Esophagus squamous epithelium (tissue), 5 donors: ENCODE measurements at regions of chr17 and their contacts with region 1.

Region 1: GRCh38 chr17:14300575-14301278 is at the start of gene HS3ST3B1:
- DNase-seq: peak; percentile 84
- H3K4me3 ChIP-seq: peak within 1 kb of the TSS; percentile 67 to 83 (median 72)
- H3K27ac ChIP-seq: peak within 1 kb of the TSS; percentile 84 to 88 (median 88)
- H3K4me1 ChIP-seq: peaks cover 27 to 88% (median 30%) of the 10 kb centered on the region in 3 donors
- H3K27me3 ChIP-seq: peaks cover 0 to 100% (median 22%) of the 10 kb centered on the region in 4 donors
- CTCF ChIP-seq: peak in 3 of 6 experiments; percentile 9 to 25 (median 19)
- POLR2A ChIP-seq: peak in 2 of 4 donors; percentile 73 to 95
- total RNA-seq, gene HS3ST3B1: 5.6 to 7.6 (median 6.4) TPM

Region 2: DNA sequence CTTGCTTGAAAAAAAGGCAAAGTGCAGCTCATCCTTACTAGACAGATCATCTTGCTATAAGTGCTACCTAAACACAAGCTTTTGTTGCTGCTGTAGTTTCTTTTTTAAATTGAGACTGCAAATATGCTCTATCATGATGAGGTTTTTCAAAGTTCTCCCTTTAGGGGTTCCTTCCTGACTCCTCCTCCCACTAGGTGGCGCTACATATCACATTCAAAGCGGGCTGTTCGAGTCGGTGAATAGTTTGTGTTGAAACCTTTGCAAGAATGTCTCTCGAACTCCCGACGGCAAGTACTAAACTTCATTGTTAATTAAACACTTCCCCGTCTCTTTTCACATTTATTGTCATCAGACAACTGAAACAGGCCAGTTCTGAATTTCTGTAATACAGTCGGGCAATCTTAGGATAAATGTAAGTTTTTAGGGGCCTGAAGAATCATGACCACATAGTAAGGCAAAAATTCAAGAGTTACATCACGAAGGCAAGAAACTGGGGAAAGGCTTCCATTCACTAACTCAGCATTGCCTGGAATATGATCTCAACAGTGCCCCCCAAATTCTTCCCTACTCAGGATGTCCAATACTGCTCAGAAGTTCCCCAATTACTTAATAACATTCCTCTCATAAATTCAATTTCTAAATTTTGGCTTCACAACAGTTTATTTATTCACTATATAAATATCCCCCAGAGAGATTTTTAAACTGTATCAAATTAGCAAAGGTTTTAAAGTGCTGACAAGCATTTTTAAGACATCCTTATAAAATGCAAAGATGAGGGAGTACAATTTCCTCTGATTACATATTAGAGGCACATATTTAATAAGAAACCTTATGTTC is 705.7 kb before region 1 on chr17:
- intact Hi-C with region 1: loop called (anchors 5 kb)
- DNase-seq: peak; percentile 16
- H3K4me3 ChIP-seq: no peak overlapping the region
- H3K27ac ChIP-seq: peak overlapping the region in 1 of 4 donors; percentile 18
- H3K4me1 ChIP-seq: peaks cover 0 to 26% (median 0%) of the 10 kb centered on the region in 3 donors
- H3K27me3 ChIP-seq: peaks cover 0 to 34% (median 0%) of the 10 kb centered on the region in 4 donors
- CTCF ChIP-seq: peak; percentile 76 to 92 (median 86)
- POLR2A ChIP-seq: no peak

Region 3: GRCh38 chr17:13874817-13875216 is 425.9 kb before region 1 on chr17:
- intact Hi-C with region 1: loop called (anchors 5 kb)
- DNase-seq: no peak
- H3K4me3 ChIP-seq: no peak overlapping the region
- H3K27ac ChIP-seq: no peak overlapping the region
- H3K4me1 ChIP-seq: no peaks in the 10 kb centered on the region
- H3K27me3 ChIP-seq: no peaks in the 10 kb centered on the region
- CTCF ChIP-seq: no peak
- POLR2A ChIP-seq: no peak

Region 4: DNA sequence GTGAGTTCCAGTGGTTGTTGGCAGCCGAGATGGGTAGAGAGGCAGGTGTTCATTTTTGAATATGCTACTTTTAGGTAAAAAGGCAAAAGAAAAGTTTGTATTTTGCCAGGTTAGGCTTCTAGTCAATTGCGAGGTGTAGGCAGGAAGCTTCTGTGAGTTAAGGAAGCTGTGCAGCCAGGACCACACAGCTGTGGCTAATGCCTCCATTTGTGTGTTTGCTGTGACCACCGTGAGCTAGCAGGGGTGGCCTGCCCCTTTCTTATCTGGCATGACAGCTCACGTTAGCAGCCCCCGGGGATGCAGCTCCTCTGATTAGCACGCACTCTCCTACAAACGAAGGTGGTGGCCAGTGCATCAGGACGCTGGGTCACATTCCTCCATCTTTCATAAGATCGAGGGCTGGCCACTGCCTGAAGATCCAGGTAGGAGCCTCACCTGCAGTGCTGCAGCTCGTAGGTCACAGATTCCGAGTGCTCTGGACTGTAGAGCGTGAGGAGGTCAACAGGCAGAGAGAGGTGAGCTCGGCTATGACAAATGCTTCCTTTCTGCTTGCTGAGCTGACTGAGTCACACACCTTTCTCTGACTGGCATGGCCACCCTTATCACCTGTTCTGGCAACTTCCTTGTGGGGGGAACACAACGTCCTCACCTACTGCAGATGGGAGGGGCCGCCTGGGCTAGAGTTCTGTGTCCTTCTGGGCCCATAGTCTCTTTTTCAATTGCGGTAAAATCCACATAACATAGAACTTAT is 244.6 kb after region 1 on chr17:
- intact Hi-C with region 1: no loop called
- DNase-seq: no peak
- H3K4me3 ChIP-seq: no peak overlapping the region
- H3K27ac ChIP-seq: no peak overlapping the region
- H3K4me1 ChIP-seq: no peaks in the 10 kb centered on the region
- H3K27me3 ChIP-seq: peaks cover 0 to 6% (median 0%) of the 10 kb centered on the region in 4 donors
- CTCF ChIP-seq: no peak
- POLR2A ChIP-seq: no peak

Region 5: GRCh38 chr17:14882131-14882530 is 581.4 kb after region 1 on chr17:
- intact Hi-C with region 1: no loop called
- DNase-seq: no peak
- H3K4me3 ChIP-seq: no peak overlapping the region
- H3K27ac ChIP-seq: no peak overlapping the region
- H3K4me1 ChIP-seq: no peaks in the 10 kb centered on the region
- H3K27me3 ChIP-seq: no peaks in the 10 kb centered on the region
- CTCF ChIP-seq: no peak
- POLR2A ChIP-seq: no peak

Region 6: DNA sequence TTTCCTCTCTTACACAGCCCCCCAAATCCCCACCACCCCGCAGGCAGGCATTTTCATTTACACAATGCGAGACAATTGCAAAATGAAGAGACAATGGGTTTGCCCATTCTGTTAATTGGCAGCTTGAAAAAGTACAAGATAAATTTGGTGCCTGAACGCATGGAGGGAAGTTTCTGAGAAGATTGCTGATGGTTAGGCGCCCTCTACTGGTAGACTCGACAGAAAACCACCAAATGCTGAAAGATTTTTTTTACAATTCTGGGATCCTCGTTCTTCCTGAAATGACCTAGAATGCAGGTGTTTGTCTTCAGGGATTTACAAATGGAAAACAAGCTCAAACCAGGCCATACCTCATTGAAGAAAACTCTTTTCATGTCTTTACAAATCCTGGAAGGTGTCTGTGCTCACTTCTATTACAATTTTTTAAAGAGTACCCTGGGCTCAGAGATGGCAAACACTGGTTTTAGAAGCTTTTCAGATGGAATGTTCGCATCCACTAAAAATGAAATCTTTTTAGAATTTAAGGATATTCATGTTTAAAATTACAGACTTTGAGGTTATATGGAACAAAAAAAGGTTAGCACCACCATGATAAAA is 625.9 kb after region 1 on chr17:
- intact Hi-C with region 1: loop called (anchors 10 kb)
- DNase-seq: no peak
- H3K4me3 ChIP-seq: no peak overlapping the region
- H3K27ac ChIP-seq: no peak overlapping the region
- H3K4me1 ChIP-seq: peaks cover 0 to 11% (median 0%) of the 10 kb centered on the region in 3 donors
- H3K27me3 ChIP-seq: peaks cover 0 to 9% (median 0%) of the 10 kb centered on the region in 4 donors
- CTCF ChIP-seq: peak; percentile 60 to 84 (median 74)
- POLR2A ChIP-seq: no peak